ENCODE measurements at regions of chr3 and their contacts with region 1.

Region 1: GRCh38 chr3:23726811-23727548 is 78.8 kb upstream of the UBE2E1 start:
- DNase-seq: peak; percentile 24
- H3K4me3 Mint-ChIP-seq: no peak overlapping the region
- H3K27ac Mint-ChIP-seq: no peak overlapping the region
- H3K4me1 Mint-ChIP-seq: peaks cover 8% of the 10 kb centered on the region
- H3K27me3 Mint-ChIP-seq: no peaks in the 10 kb centered on the region

Region 2: DNA sequence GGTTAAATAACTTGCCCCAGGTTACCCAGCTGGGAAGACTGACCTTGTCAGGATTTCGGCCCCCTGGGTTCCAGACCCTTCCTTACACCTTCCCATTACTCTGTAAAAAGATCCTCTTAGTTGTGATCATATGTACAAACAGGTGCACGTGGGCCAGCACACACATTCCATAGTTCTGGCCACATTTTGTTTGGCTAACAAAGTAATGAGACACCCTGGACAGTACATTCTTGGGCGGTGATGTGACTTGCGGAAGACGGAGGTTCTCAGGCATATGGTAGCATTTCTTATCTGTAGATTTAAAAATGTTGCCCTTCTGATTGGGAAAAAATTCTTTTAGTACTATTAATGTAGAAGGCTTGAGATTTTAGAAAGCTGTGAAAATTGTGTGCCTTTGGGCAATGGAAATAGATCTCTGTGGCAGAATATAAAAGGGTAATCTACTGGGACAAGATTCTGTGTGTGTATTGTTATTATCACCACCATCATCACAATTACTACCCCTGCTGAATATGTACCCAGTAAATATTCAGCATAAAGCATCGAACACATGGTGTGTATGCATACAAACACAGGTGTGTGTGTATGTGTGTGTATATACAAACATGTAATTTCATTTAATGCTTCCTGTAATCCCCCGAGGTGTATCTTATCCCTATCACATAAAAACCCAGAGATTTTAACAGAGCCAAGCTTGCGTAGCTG is 126.7 kb before region 1 on chr3:
- CTCF ChIA-PET with region 1: no interaction called
- POLR2A ChIA-PET with region 1: no interaction called
- intact Hi-C with region 1: no loop called
- DNase-seq: no peak
- H3K4me3 Mint-ChIP-seq: no peak overlapping the region
- H3K27ac Mint-ChIP-seq: no peak overlapping the region
- H3K4me1 Mint-ChIP-seq: no peaks in the 10 kb centered on the region
- H3K27me3 Mint-ChIP-seq: peaks cover 7% of the 10 kb centered on the region

Region 3: DNA sequence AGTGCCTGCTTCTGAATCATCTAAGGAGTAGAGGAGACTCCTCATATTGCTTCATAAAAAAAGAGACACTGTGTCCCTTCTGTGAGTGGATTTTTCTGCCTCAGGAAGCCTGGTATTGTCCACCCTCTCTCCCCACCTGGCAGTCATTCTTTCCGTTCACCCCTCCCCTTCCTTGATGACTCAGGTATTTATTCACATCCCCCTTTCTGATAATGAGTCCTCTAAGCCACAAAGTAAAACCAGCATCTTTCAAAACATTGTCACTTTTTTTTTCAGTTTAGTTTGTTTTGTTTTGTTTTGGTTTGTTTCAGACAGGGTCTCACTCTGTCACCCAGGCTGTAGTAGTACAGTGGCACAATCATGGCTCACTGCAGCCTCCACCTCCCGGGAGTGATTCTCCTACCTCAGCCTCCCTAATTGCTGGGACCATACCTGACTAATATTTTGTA is 13.6 kb after region 1 on chr3:
- CTCF ChIA-PET with region 1: no interaction called
- POLR2A ChIA-PET with region 1: interaction called, 3 read pairs
- intact Hi-C with region 1: loop called (anchors 1 kb)
- DNase-seq: peak; percentile 74
- H3K4me3 Mint-ChIP-seq: no peak overlapping the region
- H3K27ac Mint-ChIP-seq: no peak overlapping the region
- H3K4me1 Mint-ChIP-seq: peaks cover 8% of the 10 kb centered on the region
- H3K27me3 Mint-ChIP-seq: peaks cover 14% of the 10 kb centered on the region

Region 4: DNA sequence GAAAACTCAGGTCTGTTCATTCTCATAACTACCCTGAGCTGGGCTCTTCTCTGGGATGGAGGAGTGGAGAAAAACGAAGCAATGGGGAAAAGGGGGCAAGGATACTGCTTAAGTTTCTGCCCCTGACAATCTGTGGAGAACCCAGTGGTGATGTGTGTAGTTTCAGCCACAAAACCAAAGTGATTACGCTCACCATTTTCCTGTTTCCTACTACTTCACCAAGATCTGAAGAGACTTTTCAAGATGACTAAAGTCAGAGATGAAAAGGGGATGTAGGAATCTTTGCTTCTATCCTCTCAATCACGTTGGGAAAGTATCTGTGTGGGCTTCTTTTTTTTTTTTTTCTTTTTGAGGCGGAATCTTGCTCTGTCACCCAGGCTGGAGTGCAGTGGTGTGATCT is 70.5 kb after region 1 on chr3:
- CTCF ChIA-PET with region 1: no interaction called
- POLR2A ChIA-PET with region 1: no interaction called
- intact Hi-C with region 1: loop called (anchors 1 kb)
- DNase-seq: peak; percentile 22
- H3K4me3 Mint-ChIP-seq: no peak overlapping the region
- H3K27ac Mint-ChIP-seq: peak overlapping the region; percentile 6
- H3K4me1 Mint-ChIP-seq: peaks cover 15% of the 10 kb centered on the region
- H3K27me3 Mint-ChIP-seq: peaks cover 9% of the 10 kb centered on the region

Region 5: DNA sequence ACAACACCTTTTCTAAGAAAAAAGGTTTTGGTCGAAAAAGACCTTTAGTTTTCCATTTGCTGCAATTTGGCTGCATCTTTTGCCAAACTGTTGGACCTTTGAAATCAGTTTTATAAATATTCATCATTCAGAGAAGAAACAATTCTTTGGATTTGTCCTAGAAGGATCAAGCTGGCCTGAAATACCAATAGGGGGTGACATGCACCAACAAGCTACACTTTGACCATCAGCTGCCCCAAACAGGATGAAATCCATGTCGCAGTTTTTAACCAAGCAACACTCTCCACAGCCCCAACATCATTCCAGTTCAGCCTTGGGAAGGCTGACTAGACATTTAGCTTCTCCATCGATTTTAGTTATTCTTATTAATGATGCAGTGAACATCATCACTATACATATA is 199.8 kb after region 1 on chr3:
- CTCF ChIA-PET with region 1: no interaction called
- POLR2A ChIA-PET with region 1: no interaction called
- intact Hi-C with region 1: no loop called
- DNase-seq: no peak
- H3K4me3 Mint-ChIP-seq: no peak overlapping the region
- H3K27ac Mint-ChIP-seq: no peak overlapping the region
- H3K4me1 Mint-ChIP-seq: no peaks in the 10 kb centered on the region
- H3K27me3 Mint-ChIP-seq: no peaks in the 10 kb centered on the region

Measured in activated CD4-positive, alpha-beta memory T cell treated with anti-CD3 and anti-CD28 coated beads for 36 hours (primary cell).